GM12878 (cell line): ENCODE measurements at regions of chr14 and their contacts with region 1.

Region 1: GRCh38 chr14:59126710-59127432 is 61.6 kb upstream of the DAAM1 start:
- DNase-seq: no peak
- ATAC-seq: peak; percentile 92
- H3K4me3 ChIP-seq: no peak overlapping the region
- H3K27ac ChIP-seq: no peak overlapping the region
- H3K4me1 ChIP-seq: no peaks in the 10 kb centered on the region
- H3K27me3 ChIP-seq: no peaks in the 10 kb centered on the region
- CTCF ChIP-seq: peak; percentile 64 to 87 (median 64)
- EP300 ChIP-seq: no peak
- POLR2A ChIP-seq: no peak
- RAD21 ChIP-seq: peak; percentile 94

Region 2: DNA sequence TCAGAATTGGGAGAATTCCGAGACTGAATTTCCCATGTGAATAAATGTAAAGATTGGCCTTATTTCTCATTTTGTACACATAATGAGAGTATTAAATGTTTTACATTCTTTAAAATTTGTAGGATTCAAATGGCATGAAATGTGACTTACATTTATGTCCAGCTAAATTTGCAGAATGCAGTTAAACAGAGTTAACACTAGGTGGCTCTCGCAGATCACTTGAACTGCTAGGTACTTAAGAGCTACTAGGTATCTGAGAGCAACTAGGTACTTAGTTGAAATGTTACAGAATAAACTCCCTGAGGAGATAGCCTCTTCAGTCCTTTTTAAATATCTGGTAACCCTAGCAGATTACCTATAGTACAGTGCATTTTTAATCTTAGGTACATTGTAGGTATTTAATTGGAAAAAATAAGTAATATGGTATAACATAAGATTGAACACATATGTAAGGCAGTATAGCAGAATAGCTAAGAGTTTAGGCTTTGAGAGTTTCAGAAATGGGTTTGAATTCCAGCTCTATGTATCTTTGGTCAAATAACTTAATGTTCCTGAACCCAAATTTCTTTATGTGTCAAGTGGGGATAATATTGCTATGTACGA is 625.6 kb before region 1 on chr14:
- CTCF ChIA-PET with region 1: interaction called, 62 read pairs
- POLR2A ChIA-PET with region 1: no interaction called
- RAD21 ChIA-PET with region 1: interaction called, 44 read pairs
- SMC1A ChIA-PET with region 1: interaction called, 67 read pairs
- in situ Hi-C with region 1: no loop called
- intact Hi-C with region 1: loop called (anchors 1 kb)
- DNase-seq: peak; percentile 30
- ATAC-seq: peak; percentile 91
- H3K4me3 ChIP-seq: no peak overlapping the region
- H3K27ac ChIP-seq: no peak overlapping the region
- H3K4me1 ChIP-seq: no peaks in the 10 kb centered on the region
- H3K27me3 ChIP-seq: no peaks in the 10 kb centered on the region
- CTCF ChIP-seq: peak; percentile 72 to 89 (median 75)
- EP300 ChIP-seq: no peak
- POLR2A ChIP-seq: no peak
- RAD21 ChIP-seq: peak; percentile 96

Region 3: GRCh38 chr14:59055439-59056045 is 71.3 kb before region 1 on chr14:
- CTCF ChIA-PET with region 1: interaction called, 17 read pairs
- POLR2A ChIA-PET with region 1: no interaction called
- RAD21 ChIA-PET with region 1: interaction called, 18 read pairs
- SMC1A ChIA-PET with region 1: interaction called, 14 read pairs
- in situ Hi-C with region 1: no loop called
- intact Hi-C with region 1: no loop called
- DNase-seq: peak; percentile 7
- ATAC-seq: peak; percentile 97
- H3K4me3 ChIP-seq: no peak overlapping the region
- H3K27ac ChIP-seq: no peak overlapping the region
- H3K4me1 ChIP-seq: no peaks in the 10 kb centered on the region
- H3K27me3 ChIP-seq: no peaks in the 10 kb centered on the region
- CTCF ChIP-seq: peak; percentile 67 to 85 (median 74)
- EP300 ChIP-seq: no peak
- POLR2A ChIP-seq: no peak
- RAD21 ChIP-seq: peak; percentile 90

Region 4: DNA sequence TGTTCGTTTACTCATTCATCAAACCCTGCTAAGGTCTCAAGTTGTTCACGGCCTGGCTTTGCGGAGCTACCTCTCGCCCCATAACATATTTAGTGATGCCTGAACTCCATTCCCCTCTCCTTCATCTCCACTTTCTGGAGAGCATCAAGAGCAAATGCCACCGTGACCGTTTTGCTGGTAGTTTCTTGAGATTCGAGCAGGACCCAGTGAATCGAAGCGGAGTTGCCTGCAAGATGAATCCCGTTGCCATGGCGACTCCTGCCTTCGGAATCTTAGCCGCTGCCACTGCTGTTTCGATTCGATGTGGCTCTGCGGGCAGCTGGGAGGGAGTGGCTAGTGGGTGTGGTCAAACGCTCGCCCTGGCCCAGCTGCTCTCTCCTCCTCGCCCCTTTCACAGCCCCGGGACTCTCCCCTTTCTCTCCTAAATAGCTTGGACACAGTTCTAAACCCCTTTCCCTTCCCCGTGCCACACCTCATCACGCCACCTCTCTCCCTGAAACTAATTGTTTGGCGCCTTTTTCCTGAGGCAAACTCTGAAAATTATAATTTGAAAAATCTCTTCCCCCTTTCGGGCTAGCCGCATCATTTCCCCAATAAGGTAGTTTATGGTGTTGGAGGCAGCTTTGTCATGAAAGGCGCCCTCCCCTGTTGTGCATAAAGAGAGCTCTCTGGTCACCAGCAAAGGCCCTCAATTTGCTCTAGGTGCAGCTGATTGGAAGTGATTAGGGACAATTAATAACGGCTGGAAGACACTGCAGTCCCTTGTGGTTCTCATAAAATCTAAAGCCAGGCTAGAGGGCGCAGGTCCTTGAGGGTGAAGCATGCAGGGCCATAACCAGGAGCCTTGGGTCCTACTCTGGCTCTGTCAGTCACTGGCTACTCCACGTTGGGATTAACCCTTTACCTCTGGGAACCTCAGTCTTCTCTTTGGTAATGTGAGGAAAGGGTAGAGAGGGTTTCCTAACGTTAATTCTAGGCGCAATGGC is 63.2 kb after region 1 on chr14:
- CTCF ChIA-PET with region 1: interaction called, 13 read pairs
- POLR2A ChIA-PET with region 1: interaction called, 4 read pairs
- RAD21 ChIA-PET with region 1: interaction called, 10 read pairs
- SMC1A ChIA-PET with region 1: interaction called, 35 read pairs
- in situ Hi-C with region 1: no loop called
- intact Hi-C with region 1: loop called (anchors 1 kb)
- DNase-seq: peak; percentile 69
- ATAC-seq: peak; percentile 74
- H3K4me3 ChIP-seq: peak overlapping the region; percentile 91
- H3K27ac ChIP-seq: peak overlapping the region; percentile 49
- H3K4me1 ChIP-seq: peaks cover 7% of the 10 kb centered on the region
- H3K27me3 ChIP-seq: no peaks in the 10 kb centered on the region
- CTCF ChIP-seq: peak; percentile 15 to 46 (median 34); a peak in 4 of 6 replicates
- EP300 ChIP-seq: peak in 1 of 2 experiments; percentile 50; a peak in 2 of 4 replicates
- POLR2A ChIP-seq: no peak; the same call in 1 of the 2 replicates
- RAD21 ChIP-seq: no peak

Region 5: GRCh38 chr14:59358105-59358504 is 231.2 kb after region 1 on chr14:
- CTCF ChIA-PET with region 1: no interaction called
- POLR2A ChIA-PET with region 1: no interaction called
- RAD21 ChIA-PET with region 1: no interaction called
- SMC1A ChIA-PET with region 1: interaction called, 3 read pairs
- in situ Hi-C with region 1: no loop called
- intact Hi-C with region 1: loop called (anchors 2 kb)
- DNase-seq: no peak
- ATAC-seq: no peak
- H3K4me3 ChIP-seq: no peak overlapping the region
- H3K27ac ChIP-seq: no peak overlapping the region
- H3K4me1 ChIP-seq: peaks cover 50% of the 10 kb centered on the region
- H3K27me3 ChIP-seq: no peaks in the 10 kb centered on the region
- CTCF ChIP-seq: no peak
- EP300 ChIP-seq: no peak
- POLR2A ChIP-seq: no peak
- RAD21 ChIP-seq: no peak

Region 6: DNA sequence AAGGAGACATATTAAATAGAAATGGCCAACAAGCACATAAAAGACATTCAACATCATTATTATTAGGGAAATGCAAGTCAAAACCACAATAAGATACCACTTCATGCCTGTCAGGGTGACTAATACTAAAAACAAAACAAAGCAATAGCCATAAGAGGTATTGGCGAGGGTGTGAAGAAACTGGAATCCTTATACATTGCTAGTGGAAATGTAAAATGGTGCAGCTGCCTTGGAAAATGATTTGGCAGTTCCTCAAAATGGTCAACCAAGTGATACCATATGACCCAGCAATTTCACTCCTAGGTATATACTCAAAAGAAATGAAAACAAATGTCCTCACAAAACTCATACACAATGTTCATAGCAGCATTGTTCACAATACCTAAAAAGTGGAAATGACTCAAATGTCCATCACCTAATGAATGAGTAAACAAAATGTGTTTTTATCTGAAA is 311.4 kb after region 1 on chr14:
- CTCF ChIA-PET with region 1: interaction called, 99 read pairs
- POLR2A ChIA-PET with region 1: interaction called, 4 read pairs
- RAD21 ChIA-PET with region 1: interaction called, 52 read pairs
- SMC1A ChIA-PET with region 1: interaction called, 104 read pairs
- in situ Hi-C with region 1: loop called (anchors 5 kb)
- intact Hi-C with region 1: loop called (anchors 1 kb)
- DNase-seq: no peak
- ATAC-seq: peak; percentile 50
- H3K4me3 ChIP-seq: no peak overlapping the region
- H3K27ac ChIP-seq: no peak overlapping the region
- H3K4me1 ChIP-seq: no peaks in the 10 kb centered on the region
- H3K27me3 ChIP-seq: no peaks in the 10 kb centered on the region
- CTCF ChIP-seq: no peak
- EP300 ChIP-seq: no peak
- POLR2A ChIP-seq: no peak
- RAD21 ChIP-seq: no peak